ENCODE measurements at regions of chr3 and their contacts with region 1.

Region 1: DNA sequence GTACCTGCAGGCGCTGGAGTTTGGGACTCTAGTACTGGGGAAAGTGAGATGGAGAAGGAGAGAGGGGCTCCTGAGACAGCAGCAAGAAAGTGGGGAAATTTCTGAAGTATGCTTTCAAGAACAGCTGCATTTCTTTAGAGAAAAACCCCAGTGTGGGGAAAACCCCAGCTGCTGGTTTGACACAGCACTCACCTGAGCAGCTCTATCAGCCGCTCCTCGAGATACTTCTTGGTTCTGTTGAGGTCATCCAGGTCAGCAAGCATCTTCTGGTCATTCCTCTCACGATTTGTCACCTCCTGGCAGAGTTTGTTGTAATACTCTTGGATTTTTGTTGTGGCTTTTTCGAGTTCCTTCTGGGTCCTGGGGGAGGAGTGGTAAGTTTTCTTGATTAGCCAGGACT is 18.8 kb downstream of the CXCR6 start:
- DNase-seq: peak; percentile 48
- H3K4me3 Mint-ChIP-seq: peak overlapping the region; percentile 54
- H3K27ac Mint-ChIP-seq: peak overlapping the region; percentile 73
- H3K4me1 Mint-ChIP-seq: peaks cover 88% of the 10 kb centered on the region
- H3K27me3 Mint-ChIP-seq: no peaks in the 10 kb centered on the region

Region 2: GRCh38 chr3:45948311-45948781 is 13.7 kb before region 1 on chr3:
- intact Hi-C with region 1: loop called (anchors 1 kb)
- DNase-seq: no peak
- H3K4me3 Mint-ChIP-seq: peak overlapping the region; percentile 31
- H3K27ac Mint-ChIP-seq: peak overlapping the region; percentile 62
- H3K4me1 Mint-ChIP-seq: peaks cover 98% of the 10 kb centered on the region
- H3K27me3 Mint-ChIP-seq: no peaks in the 10 kb centered on the region

Region 3: DNA sequence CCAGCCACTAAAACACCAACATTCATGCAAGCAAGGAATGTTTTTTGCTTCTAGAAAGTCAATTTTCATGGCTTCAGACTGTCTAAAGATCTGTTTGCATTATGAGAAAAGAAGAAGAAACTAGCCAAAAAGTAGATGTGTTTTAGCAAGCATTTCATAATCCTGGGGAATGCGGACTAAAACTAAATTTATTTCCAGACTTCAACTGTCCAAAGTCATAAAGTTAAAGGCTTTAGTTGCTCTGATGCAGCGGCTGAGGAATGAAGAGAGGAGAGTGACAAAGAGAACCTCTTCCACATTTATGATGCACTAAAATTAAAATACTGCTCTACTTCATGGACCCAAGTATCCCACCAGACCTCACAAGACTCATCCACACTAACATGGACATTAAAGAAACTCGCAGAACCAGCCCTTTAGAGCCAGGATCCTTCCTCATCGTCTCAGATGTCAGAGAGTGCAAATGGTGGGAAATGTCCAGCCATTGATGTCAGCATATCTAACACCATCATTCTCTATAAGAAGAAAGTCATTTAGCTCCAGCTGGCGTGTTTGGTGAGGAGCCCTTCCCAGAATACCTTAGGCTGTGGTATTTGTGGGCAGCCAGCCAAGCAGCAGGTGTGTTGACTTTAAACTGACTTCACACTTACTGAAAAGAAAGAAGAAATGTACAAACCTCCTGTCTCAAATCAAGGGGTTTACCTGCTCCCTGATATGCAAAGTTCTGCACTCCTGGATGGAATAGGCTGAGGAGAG is 16.2 kb after region 1 on chr3:
- intact Hi-C with region 1: loop called (anchors 1 kb)
- DNase-seq: peak; percentile 72
- H3K4me3 Mint-ChIP-seq: peak overlapping the region; percentile 86
- H3K27ac Mint-ChIP-seq: peak overlapping the region; percentile 98
- H3K4me1 Mint-ChIP-seq: peaks cover 89% of the 10 kb centered on the region
- H3K27me3 Mint-ChIP-seq: no peaks in the 10 kb centered on the region

Region 4: GRCh38 chr3:46017720-46018119 is 55.7 kb after region 1 on chr3:
- intact Hi-C with region 1: loop called (anchors 1 kb)
- DNase-seq: no peak
- H3K4me3 Mint-ChIP-seq: peak overlapping the region; percentile 21
- H3K27ac Mint-ChIP-seq: peak overlapping the region; percentile 80
- H3K4me1 Mint-ChIP-seq: peaks cover 58% of the 10 kb centered on the region
- H3K27me3 Mint-ChIP-seq: peaks cover 4% of the 10 kb centered on the region

Region 5: GRCh38 chr3:46070595-46071093 is 108.6 kb after region 1 on chr3:
- intact Hi-C with region 1: loop called (anchors 1 kb)
- DNase-seq: no peak
- H3K4me3 Mint-ChIP-seq: peak overlapping the region; percentile 53
- H3K27ac Mint-ChIP-seq: peak overlapping the region; percentile 96
- H3K4me1 Mint-ChIP-seq: peaks cover 70% of the 10 kb centered on the region
- H3K27me3 Mint-ChIP-seq: peaks cover 12% of the 10 kb centered on the region

Region 6: GRCh38 chr3:46135475-46135874 is 173.4 kb after region 1 on chr3:
- intact Hi-C with region 1: no loop called
- DNase-seq: peak; percentile 16
- H3K4me3 Mint-ChIP-seq: no peak overlapping the region
- H3K27ac Mint-ChIP-seq: no peak overlapping the region
- H3K4me1 Mint-ChIP-seq: peaks cover 18% of the 10 kb centered on the region
- H3K27me3 Mint-ChIP-seq: no peaks in the 10 kb centered on the region

Region 7: DNA sequence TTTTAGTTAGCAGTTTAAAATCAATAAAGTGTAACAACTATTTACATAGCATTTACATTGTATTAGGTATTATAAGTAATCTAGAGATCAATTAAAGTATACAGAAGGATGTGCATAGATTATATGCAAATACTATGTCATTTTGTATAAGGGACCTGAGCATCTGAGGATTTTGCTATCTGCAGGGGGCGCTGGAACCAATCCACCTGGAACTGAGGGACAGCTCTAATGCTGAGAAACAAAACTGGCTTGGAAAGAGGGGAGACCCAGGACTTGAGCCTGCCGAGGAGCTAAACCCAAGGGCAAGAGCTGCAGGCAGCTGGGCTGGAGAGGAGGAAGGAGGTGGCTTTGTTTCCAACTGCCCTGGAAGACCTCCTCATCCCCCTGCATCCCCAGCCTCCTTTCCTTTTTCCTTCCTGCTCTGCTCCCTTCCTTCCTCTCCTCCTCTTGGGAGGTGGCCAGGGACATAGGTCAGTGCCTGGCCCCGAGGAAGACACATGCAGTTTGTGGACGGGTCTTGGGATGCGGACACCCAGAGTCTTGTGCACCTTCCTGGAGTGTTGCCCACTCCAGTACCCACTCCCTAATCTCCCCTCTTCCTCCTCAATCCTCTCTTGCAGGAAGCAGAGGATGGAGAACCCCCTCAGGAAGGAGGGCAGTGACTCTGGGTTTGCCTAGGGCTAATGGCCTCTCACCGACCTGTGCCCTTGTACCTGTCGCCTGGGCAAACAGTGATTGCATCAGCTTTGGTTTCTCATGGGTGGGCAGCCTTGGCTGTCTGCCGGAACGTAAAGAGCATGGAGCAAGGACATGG is 534.9 kb after region 1 on chr3:
- intact Hi-C with region 1: no loop called
- DNase-seq: no peak
- H3K4me3 Mint-ChIP-seq: no peak overlapping the region
- H3K27ac Mint-ChIP-seq: no peak overlapping the region
- H3K4me1 Mint-ChIP-seq: peaks cover 5% of the 10 kb centered on the region
- H3K27me3 Mint-ChIP-seq: peaks cover 3% of the 10 kb centered on the region